ENCODE measurements at regions of chr4 and their contacts with region 1.

Region 1: DNA sequence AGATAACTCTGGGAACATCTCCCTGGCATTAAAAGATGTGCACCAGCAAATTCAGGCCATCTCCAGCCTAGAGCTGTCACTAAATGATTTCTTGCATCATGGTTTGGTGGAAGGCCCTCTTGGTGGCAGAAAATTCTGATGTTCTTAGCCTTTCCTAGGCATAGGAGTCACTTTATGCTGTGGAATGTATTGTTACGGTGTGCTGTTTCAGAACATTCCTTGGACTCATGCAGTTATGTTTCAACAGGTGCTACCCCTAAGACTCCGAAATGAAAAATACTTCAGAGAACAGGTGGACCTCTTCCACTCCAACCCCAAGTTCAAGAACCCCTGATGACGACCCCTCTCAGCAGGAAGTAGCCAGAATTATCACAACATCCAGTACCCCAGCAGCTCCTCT is 20.3 kb upstream of the PAPSS1 start:
- DNase-seq: no peak
- H3K4me3 ChIP-seq: no peak overlapping the region
- H3K27ac ChIP-seq: peak overlapping the region; percentile 58 to 68
- H3K4me1 ChIP-seq: no peaks in the 10 kb centered on the region
- H3K27me3 ChIP-seq: no peaks in the 10 kb centered on the region
- CTCF ChIP-seq: peak in 2 of 4 experiments; percentile 9 to 15
- POLR2A ChIP-seq: no peak

Region 2: DNA sequence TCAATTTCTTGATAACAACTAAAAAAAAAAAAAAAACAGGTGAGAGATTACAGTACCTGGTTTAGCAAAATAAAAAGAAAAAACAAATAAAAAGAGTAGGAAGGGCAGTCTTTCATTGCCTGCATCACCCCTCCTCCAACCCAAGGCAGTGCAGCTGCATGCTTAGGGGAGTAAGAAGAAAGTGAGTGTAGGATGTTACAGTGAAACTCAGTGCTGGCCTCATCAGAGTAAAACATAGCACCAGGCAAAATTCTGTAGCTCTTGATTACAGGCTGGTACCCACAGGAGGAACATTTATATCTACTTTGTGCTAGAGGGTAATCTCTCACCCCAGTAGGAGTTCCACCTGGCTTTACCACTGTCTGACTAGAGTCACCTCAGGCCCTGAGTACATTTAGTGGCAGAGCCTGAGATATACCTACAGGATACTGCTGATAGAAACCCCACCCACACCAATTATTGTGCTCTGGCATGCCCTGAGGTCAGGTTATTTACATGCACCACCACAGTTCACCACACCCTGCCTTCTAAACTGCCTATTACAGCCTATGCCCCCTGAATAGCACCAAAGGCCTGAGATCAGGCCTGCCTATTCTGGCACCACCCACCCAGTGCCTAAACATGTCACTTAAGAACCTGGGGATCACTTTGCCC is 261.9 kb before region 1 on chr4:
- intact Hi-C with region 1: no loop called
- DNase-seq: no peak
- H3K4me3 ChIP-seq: no peak overlapping the region
- H3K27ac ChIP-seq: no peak overlapping the region
- H3K4me1 ChIP-seq: no peaks in the 10 kb centered on the region
- H3K27me3 ChIP-seq: no peaks in the 10 kb centered on the region
- CTCF ChIP-seq: no peak
- POLR2A ChIP-seq: no peak

Region 3: GRCh38 chr4:107719922-107720722 is 20.3 kb before region 1 on chr4 and contains the start of gene PAPSS1:
- intact Hi-C with region 1: loop called (anchors 2 kb)
- DNase-seq: peak; percentile 98
- H3K4me3 ChIP-seq: peak within 1 kb of the TSS; percentile 54 to 73
- H3K27ac ChIP-seq: peak within 1 kb of the TSS; percentile 90 to 94
- H3K4me1 ChIP-seq: peaks cover 4% of the 10 kb centered on the region
- H3K27me3 ChIP-seq: no peaks in the 10 kb centered on the region
- CTCF ChIP-seq: peak in 1 of 4 experiments; percentile 4
- POLR2A ChIP-seq: peak; percentile 89
- total RNA-seq, gene PAPSS1: 38.3 to 74.6 TPM

Region 4: DNA sequence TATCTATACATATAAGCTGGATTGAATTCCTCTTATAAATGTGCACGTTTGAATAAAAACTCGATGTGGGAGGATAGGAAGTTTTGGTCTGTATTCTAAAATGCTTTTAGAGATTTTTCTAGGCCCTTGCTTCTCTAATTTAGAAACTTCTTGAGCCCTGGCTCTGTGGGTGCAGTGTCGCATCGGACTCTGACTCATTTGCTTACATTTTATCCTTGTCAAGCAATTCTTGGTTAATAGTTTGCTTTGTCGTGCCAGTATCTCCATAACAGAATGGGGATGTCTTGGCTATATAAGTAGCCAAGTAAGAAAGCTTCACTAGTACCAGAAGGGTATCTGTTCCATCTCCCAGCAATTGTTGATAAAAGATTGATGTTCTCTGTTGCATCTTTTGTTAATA is 95.0 kb after region 1 on chr4:
- intact Hi-C with region 1: no loop called
- DNase-seq: no peak
- H3K4me3 ChIP-seq: no peak overlapping the region
- H3K27ac ChIP-seq: no peak overlapping the region
- H3K4me1 ChIP-seq: no peaks in the 10 kb centered on the region
- H3K27me3 ChIP-seq: no peaks in the 10 kb centered on the region
- CTCF ChIP-seq: no peak
- POLR2A ChIP-seq: no peak

Region 5: GRCh38 chr4:107989537-107990386 is 249.4 kb after region 1 on chr4 and contains the start of gene HADH:
- intact Hi-C with region 1: loop called (anchors 5 kb)
- DNase-seq: peak; percentile 95
- H3K4me3 ChIP-seq: peak within 1 kb of the TSS; percentile 73 to 89
- H3K27ac ChIP-seq: peak within 1 kb of the TSS; percentile 86 to 90
- H3K4me1 ChIP-seq: no peaks in the 10 kb centered on the region
- H3K27me3 ChIP-seq: no peaks in the 10 kb centered on the region
- CTCF ChIP-seq: peak in 1 of 4 experiments; percentile 22
- POLR2A ChIP-seq: peak; percentile 92
- total RNA-seq, gene HADH: 69.0 to 75.2 TPM

Measured in prostate gland (tissue), 2 donors.